WTC11 (cell line): ENCODE measurements at regions of chr6 and their contacts with region 1.

Region 1: GRCh38 chr6:40308533-40309306 is 278.4 kb downstream of the LRFN2 start:
- DNase-seq: peak; percentile 93
- ATAC-seq: peak; percentile 96
- H3K4me3 Mint-ChIP-seq: peak overlapping the region; percentile 44; the same call in 1 of the 2 replicates
- H3K27ac Mint-ChIP-seq: no peak overlapping the region
- H3K4me1 Mint-ChIP-seq: peaks cover 18% of the 10 kb centered on the region
- H3K27me3 Mint-ChIP-seq: no peaks in the 10 kb centered on the region
- CTCF ChIP-seq: peak; percentile 96

Region 2: DNA sequence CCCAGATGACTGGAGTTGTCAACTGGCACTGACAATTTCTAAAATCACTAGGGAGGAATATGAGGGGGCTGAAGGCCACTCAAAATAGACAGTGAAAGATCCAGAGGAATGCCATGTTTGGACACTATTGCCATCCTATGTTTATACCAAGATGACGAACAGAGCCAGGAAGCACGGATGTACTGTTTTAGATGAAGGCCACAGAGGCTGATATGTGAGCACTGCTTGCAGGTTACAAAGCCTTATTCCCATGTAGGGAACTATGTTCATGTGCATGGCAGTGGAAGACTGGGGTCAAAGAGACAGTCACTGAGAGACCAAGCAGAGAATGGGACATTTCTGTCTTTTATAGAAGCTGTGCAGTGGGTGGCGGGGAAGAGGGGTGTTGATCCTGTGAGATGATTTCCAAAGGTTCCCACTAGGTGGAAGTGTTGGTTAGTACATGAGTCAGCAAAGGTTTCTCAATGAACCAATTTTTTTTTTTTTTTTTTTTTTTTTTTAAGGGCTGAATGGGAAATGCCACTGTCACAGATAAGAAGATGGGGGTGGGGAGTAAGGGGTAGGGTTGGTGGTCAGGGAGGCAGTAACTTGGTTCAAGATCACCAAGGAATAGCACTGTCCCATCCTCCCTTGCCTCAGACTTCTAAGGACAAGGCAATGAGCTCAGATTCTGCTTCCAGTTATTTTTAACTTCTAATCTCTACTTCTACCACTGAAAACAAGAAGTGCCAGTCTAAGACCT is 327.7 kb before region 1 on chr6:
- CTCF ChIA-PET with region 1: interaction called, 13 read pairs
- POLR2A ChIA-PET with region 1: no interaction called
- DNase-seq: peak; percentile 24
- ATAC-seq: peak; percentile 82
- H3K4me3 Mint-ChIP-seq: no peak overlapping the region
- H3K27ac Mint-ChIP-seq: no peak overlapping the region
- H3K4me1 Mint-ChIP-seq: peaks cover 7% of the 10 kb centered on the region
- H3K27me3 Mint-ChIP-seq: no peaks in the 10 kb centered on the region
- CTCF ChIP-seq: peak; percentile 39

Region 3: DNA sequence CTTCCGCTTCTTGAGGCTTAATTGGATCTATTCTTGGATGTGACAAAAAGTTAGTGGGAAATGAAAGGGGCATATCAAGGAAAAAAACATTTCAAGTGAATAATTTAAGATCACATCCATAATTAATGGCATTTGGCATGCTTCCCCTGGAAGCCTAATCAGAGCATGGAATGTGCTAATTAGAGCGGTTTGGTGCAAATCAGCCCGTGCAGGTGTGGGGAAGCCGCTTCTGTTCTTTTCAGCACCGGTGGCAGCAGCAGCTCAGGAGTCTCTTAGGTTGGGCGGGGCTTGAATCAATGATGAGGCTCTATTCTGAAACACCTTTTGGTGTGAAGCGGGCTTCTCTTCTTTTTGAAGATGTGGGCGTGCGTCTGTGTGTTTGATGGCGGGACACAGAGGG is 22.7 kb before region 1 on chr6:
- CTCF ChIA-PET with region 1: interaction called, 10 read pairs
- POLR2A ChIA-PET with region 1: no interaction called
- DNase-seq: peak; percentile 60
- ATAC-seq: peak; percentile 86
- H3K4me3 Mint-ChIP-seq: peak overlapping the region; percentile 59
- H3K27ac Mint-ChIP-seq: peak overlapping the region; percentile 94
- H3K4me1 Mint-ChIP-seq: peaks cover 79% of the 10 kb centered on the region
- H3K27me3 Mint-ChIP-seq: no peaks in the 10 kb centered on the region; the same call in none of the 2 replicates
- CTCF ChIP-seq: no peak